ENCODE measurements at regions of chr5 and their contacts with region 1.

Region 1: DNA sequence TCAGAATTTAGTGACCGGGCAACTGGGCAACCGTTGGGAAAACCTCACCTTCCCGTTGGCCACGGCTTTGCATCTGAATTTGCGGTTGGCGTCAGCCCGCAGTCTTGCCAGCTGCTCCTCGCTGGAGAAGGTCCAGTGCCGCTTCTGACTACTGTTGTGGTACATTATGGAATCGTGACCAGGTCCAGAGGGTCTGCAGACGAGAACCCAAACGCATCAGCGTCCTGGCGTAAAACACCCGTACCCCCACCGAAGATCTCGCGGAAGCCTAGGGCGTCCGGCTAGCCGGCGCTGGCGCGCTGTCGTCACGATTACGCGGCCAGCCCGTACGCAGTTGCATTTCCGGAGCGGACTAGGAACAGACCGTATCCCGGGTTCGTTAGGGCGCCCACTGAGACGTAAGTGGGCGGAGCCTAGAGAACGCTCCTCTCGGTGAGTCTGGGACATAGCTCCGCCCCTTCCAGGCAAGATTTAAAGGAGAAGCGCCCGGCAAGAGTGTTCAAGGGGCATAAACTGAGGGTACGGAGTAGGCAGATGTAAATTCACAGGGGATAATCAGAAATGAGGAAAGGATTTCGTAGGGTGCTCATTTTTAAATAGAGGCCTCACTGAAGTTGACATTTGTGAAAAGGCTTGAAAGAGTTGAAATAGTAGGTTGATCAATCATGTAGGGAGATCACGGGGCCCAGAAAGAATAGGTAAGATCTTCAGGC is at the start of gene CCNH:
- DNase-seq: peak; percentile 98
- H3K4me3 Mint-ChIP-seq: peak within 1 kb of the TSS; percentile 95
- H3K27ac Mint-ChIP-seq: peak within 1 kb of the TSS; percentile 95
- H3K4me1 Mint-ChIP-seq: peaks cover 34% of the 10 kb centered on the region
- H3K27me3 Mint-ChIP-seq: no peaks in the 10 kb centered on the region
- total RNA-seq, gene CCNH: 58.1 to 61.6 TPM

Region 2: DNA sequence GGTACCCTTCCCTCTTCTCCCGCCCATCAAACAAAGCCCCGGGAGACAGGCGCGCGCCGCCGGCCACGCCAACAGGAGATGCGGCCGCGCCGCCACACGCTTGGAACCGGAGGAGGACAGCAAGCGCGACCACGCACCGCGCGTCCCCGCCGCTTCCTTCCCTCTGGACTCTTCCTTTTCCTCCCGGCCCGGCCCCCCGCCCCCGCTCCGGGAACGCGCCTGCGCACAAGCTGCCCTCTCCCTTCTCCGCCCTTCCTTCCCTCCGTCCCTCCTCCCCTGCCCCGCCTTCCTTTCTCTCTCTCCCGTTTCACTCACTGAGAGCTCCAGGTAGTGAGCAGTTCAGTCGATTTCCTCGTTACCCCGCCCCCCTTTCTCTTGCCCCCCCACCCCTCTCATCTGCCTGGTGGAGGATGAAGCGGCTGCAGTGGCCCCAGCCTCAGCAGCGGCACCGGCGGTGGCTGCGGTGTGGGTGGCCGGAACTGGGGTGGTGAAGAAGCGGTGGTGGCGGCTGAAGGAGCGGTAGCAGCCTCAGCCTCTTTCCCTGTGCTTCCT is 145.1 kb before region 1 on chr5 and contains the start of gene RASA1:
- CTCF ChIA-PET with region 1: no interaction called
- intact Hi-C with region 1: loop called (anchors 1 kb)
- DNase-seq: peak; percentile 90
- H3K4me3 Mint-ChIP-seq: peak within 1 kb of the TSS; percentile 100
- H3K27ac Mint-ChIP-seq: peak within 1 kb of the TSS; percentile 96
- H3K4me1 Mint-ChIP-seq: peaks cover 30% of the 10 kb centered on the region
- H3K27me3 Mint-ChIP-seq: no peaks in the 10 kb centered on the region
- total RNA-seq, gene RASA1: 15.4 to 16.2 TPM

Region 3: GRCh38 chr5:87383216-87383615 is 29.6 kb before region 1 on chr5:
- CTCF ChIA-PET with region 1: no interaction called
- intact Hi-C with region 1: loop called (anchors 2 kb)
- DNase-seq: no peak
- H3K4me3 Mint-ChIP-seq: no peak overlapping the region
- H3K27ac Mint-ChIP-seq: no peak overlapping the region
- H3K4me1 Mint-ChIP-seq: no peaks in the 10 kb centered on the region
- H3K27me3 Mint-ChIP-seq: no peaks in the 10 kb centered on the region

Region 4: GRCh38 chr5:87526131-87526530 is 113.3 kb after region 1 on chr5:
- CTCF ChIA-PET with region 1: no interaction called
- intact Hi-C with region 1: no loop called
- DNase-seq: no peak
- H3K4me3 Mint-ChIP-seq: no peak overlapping the region
- H3K27ac Mint-ChIP-seq: no peak overlapping the region
- H3K4me1 Mint-ChIP-seq: no peaks in the 10 kb centered on the region
- H3K27me3 Mint-ChIP-seq: no peaks in the 10 kb centered on the region

Region 5: GRCh38 chr5:88140856-88141752 is 728.3 kb after region 1 on chr5:
- CTCF ChIA-PET with region 1: no interaction called
- intact Hi-C with region 1: loop called (anchors 2 kb)
- DNase-seq: peak; percentile 93
- H3K4me3 Mint-ChIP-seq: no peak overlapping the region
- H3K27ac Mint-ChIP-seq: no peak overlapping the region
- H3K4me1 Mint-ChIP-seq: peaks cover 9% of the 10 kb centered on the region
- H3K27me3 Mint-ChIP-seq: peaks cover 43% of the 10 kb centered on the region

Region 6: DNA sequence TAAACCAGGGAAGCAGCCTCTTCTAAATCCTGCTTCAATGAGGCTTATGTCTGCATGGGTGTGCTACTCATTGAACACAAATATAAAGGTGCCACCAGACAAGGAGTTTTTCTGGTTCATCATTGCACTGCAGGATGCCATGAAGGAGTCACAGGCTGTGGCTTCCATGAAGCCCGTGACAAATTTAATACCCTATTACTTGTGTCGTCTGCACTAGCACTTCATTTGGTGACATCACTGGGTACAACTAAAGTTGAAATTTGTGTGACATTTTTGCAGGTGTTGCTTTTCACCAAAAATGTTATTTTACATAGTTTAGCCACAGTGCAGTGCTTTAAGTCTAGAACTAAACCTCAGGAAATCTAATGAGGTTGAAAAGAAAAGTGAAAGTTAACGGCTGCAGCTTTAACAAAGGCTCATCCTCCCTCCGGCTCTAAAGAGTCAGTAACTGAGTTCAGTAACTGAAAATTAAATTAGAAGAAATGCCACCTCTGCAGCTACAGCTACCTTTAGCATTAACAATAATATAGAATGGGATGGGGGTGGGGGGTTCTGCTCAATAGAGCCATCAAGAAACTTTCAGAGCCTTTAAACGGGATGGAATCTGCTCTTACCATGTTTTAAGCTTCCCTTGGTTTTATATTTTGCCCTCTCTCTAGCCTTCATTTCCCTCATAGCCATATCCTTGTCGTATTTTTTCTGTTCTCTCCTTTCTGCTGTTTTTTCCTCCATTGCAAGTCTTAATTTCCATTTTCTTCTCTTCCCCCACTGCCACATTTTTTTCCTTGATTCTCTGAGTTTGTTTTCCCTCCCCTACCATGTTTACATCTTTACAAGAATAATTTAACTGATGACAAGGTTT is 1089.6 kb after region 1 on chr5:
- CTCF ChIA-PET with region 1: no interaction called
- intact Hi-C with region 1: loop called (anchors 5 kb)
- DNase-seq: peak; percentile 20
- H3K4me3 Mint-ChIP-seq: peak overlapping the region; percentile 78
- H3K27ac Mint-ChIP-seq: peak overlapping the region; percentile 77
- H3K4me1 Mint-ChIP-seq: peaks cover 3% of the 10 kb centered on the region
- H3K27me3 Mint-ChIP-seq: no peaks in the 10 kb centered on the region

Region 7: DNA sequence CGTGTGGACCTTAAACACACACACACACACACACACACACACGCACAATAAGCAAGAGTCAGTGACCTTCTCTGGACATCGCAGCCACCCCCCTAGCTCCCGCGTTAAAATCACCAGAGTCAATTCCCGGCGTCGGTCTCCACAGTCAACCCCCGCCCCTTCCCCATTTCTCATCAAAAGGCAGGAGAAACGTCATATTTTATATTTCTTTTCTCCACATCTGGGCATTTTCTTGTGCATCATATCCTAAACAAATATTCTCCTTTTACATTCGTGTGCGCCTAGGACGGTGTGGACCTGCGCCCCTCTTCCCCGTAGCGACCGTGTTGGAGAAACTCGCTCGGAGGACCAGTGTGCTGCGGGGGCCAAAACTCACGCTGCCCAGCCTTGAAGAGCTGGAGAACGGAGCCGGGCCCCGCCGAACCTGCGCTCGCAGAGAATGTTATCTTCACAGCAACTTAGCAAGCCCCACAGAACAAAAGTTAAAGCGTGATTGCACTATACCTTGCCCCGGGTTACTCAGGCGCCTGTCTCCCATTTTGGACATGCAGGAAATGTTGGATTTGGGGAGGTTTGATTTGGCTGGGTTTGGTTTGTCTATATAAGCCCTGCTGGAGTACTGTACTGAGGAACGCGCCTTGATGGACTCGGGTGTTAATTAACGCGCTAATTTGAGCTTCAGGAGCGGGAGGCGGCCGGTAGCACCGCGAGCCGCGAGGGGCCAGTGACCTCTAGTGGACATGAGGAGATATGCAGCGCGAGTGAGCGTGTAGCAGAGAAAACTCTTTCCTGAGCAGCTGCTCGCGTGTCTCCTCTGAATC is 1277.8 kb after region 1 on chr5:
- CTCF ChIA-PET with region 1: interaction called, 3 read pairs
- intact Hi-C with region 1: loop called (anchors 5 kb)
- DNase-seq: peak; percentile 77
- H3K4me3 Mint-ChIP-seq: peak overlapping the region; percentile 65
- H3K27ac Mint-ChIP-seq: peak overlapping the region; percentile 81
- H3K4me1 Mint-ChIP-seq: peaks cover 28% of the 10 kb centered on the region
- H3K27me3 Mint-ChIP-seq: peaks cover 84% of the 10 kb centered on the region